ENCODE measurements at regions of chr11 and their contacts with region 1.

Region 1: GRCh38 chr11:27698872-27699474 is 1.3 kb downstream of the BDNF start:
- DNase-seq: peak; percentile 78
- ATAC-seq: peak; percentile 81
- H3K4me3 Mint-ChIP-seq: no peak overlapping the region
- H3K27ac Mint-ChIP-seq: no peak overlapping the region
- H3K4me1 Mint-ChIP-seq: peaks cover 23% of the 10 kb centered on the region
- H3K27me3 Mint-ChIP-seq: peaks cover 75% of the 10 kb centered on the region

Region 2: DNA sequence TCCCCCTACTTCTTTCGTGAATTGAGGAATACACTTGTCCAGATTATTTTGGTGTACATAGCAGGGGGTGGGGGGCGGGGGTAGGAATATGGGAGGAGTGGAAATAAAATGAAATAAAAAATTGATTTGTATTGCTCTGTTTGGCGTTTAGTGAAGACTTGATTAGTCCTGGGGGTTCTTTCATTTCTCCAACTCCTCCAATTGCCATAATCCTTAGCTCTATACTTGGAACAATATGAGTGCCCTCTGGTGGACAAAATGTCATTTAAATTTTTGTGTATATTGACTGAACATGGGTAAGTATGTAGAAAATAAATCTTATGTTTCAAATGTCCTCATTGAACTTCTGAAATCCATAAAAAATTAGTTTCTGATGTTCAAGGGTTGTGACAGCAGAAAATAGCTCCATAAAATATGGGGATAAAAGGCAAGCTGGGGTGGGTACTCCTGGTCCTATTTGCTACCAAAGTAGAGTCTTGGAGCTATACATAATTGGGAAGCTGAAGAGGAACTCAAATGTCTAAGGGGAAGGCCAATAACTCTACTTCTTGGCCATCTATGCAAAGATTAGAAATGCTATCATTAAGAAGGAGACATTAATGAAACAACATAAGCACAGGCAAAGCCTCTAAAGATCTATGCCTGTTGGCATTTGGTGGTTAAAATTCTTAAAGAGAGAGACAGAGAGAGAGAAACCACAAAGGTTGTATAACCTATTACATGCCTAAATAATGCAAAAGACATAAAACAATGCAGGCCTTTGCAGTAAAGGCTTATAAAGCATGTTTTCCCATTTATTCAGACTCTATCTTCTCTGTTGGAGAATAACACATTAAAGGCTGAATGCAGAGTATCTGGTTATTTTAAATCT is 830.8 kb after region 1 on chr11:
- CTCF ChIA-PET with region 1: interaction called, 26 read pairs
- DNase-seq: no peak
- ATAC-seq: no peak
- H3K4me3 Mint-ChIP-seq: no peak overlapping the region
- H3K27ac Mint-ChIP-seq: no peak overlapping the region
- H3K4me1 Mint-ChIP-seq: no peaks in the 10 kb centered on the region
- H3K27me3 Mint-ChIP-seq: no peaks in the 10 kb centered on the region